ENCODE measurements at regions of chr18 and their contacts with region 1.

Region 1: GRCh38 chr18:22609642-22610041 is 191.9 kb upstream of the CTAGE1 start:
- DNase-seq: no peak
- H3K4me3 ChIP-seq: no peak overlapping the region
- H3K27ac ChIP-seq: no peak overlapping the region
- H3K4me1 ChIP-seq: no peaks in the 10 kb centered on the region
- H3K27me3 ChIP-seq: peaks cover 41% of the 10 kb centered on the region
- CTCF ChIP-seq: no peak

Region 2: GRCh38 chr18:21914739-21915319 is 694.8 kb before region 1 on chr18:
- CTCF ChIA-PET with region 1: no interaction called
- POLR2A ChIA-PET with region 1: no interaction called
- intact Hi-C with region 1: no loop called
- DNase-seq: peak; percentile 74
- H3K4me3 ChIP-seq: no peak overlapping the region
- H3K27ac ChIP-seq: no peak overlapping the region
- H3K4me1 ChIP-seq: no peaks in the 10 kb centered on the region
- H3K27me3 ChIP-seq: peaks cover 19% of the 10 kb centered on the region
- CTCF ChIP-seq: peak; percentile 72

Region 3: DNA sequence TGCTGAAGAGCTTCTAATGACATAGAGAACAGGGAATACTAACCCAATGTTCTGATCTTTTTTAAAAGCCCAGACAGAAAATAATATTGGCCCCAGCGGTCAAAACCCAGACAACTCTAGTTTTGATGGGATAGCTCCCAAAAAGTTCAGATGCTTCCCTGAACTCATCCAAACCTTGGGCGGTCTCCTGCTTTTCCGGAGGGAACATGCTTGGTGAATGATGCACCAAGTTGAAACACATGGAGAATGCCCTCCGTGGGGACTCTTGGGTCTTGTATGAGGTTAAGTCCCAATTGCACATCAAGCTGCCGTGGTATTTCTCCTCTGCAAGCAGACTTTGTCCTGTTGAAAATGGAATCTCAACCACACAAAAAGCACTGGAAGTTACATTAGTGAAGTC is 71.2 kb before region 1 on chr18:
- CTCF ChIA-PET with region 1: no interaction called
- POLR2A ChIA-PET with region 1: no interaction called
- intact Hi-C with region 1: no loop called
- DNase-seq: no peak
- H3K4me3 ChIP-seq: no peak overlapping the region
- H3K27ac ChIP-seq: no peak overlapping the region
- H3K4me1 ChIP-seq: no peaks in the 10 kb centered on the region
- H3K27me3 ChIP-seq: no peaks in the 10 kb centered on the region
- CTCF ChIP-seq: no peak

Region 4: DNA sequence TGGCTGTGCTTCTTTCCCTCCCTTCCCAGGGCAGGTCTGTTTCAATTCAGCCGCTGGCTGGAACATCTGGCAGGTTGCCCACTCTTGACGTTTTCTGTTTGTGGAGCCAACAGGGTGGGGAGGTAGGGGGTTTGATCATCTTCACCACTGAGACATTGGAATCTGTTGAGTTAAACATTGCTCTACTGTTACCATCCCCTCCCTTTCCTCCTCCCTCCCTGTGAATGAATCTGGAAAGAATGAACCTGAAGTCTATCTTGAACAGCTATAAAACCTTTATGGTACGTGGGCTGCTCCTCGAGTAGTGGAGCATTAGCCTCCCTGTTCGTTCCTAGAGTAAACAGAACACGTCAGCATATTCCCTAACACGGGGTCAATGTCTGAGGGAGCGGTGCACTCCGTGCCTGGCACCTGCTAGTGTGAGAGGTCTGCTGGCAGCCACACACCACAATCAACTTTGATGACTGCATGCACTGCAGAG is 73.6 kb after region 1 on chr18:
- CTCF ChIA-PET with region 1: no interaction called
- POLR2A ChIA-PET with region 1: no interaction called
- intact Hi-C with region 1: loop called (anchors 10 kb)
- DNase-seq: peak; percentile 9
- H3K4me3 ChIP-seq: no peak overlapping the region
- H3K27ac ChIP-seq: no peak overlapping the region
- H3K4me1 ChIP-seq: no peaks in the 10 kb centered on the region
- H3K27me3 ChIP-seq: peaks cover 16% of the 10 kb centered on the region
- CTCF ChIP-seq: no peak

Measured in A673 (cell line).